CD14-positive monocyte (primary cell): ENCODE measurements at regions of chr16 and their contacts with region 1.

Region 1: GRCh38 chr16:67872786-67873537 is at the start of gene EDC4:
- DNase-seq: peak; percentile 85 to 94 (median 90)
- H3K4me3 ChIP-seq: peak within 1 kb of the TSS; percentile 92 to 99 (median 93)
- H3K4me3 Mint-ChIP-seq: peak within 1 kb of the TSS; percentile 89 to 94
- H3K27ac ChIP-seq: peak within 1 kb of the TSS; percentile 87 to 90
- H3K27ac Mint-ChIP-seq: peak within 1 kb of the TSS; percentile 89 to 96 (median 92)
- H3K4me1 ChIP-seq: peaks cover 31 to 34% of the 10 kb centered on the region in 2 donors
- H3K4me1 Mint-ChIP-seq: peaks cover 38% of the 10 kb centered on the region
- H3K27me3 ChIP-seq: no peaks in the 10 kb centered on the region
- H3K27me3 Mint-ChIP-seq: peaks cover 0 to 3% (median 0%) of the 10 kb centered on the region in 3 donors
- CTCF ChIP-seq: no peak
- polyA plus RNA-seq, gene EDC4: 13.7 to 84.9 (median 18.2) TPM

Region 2: DNA sequence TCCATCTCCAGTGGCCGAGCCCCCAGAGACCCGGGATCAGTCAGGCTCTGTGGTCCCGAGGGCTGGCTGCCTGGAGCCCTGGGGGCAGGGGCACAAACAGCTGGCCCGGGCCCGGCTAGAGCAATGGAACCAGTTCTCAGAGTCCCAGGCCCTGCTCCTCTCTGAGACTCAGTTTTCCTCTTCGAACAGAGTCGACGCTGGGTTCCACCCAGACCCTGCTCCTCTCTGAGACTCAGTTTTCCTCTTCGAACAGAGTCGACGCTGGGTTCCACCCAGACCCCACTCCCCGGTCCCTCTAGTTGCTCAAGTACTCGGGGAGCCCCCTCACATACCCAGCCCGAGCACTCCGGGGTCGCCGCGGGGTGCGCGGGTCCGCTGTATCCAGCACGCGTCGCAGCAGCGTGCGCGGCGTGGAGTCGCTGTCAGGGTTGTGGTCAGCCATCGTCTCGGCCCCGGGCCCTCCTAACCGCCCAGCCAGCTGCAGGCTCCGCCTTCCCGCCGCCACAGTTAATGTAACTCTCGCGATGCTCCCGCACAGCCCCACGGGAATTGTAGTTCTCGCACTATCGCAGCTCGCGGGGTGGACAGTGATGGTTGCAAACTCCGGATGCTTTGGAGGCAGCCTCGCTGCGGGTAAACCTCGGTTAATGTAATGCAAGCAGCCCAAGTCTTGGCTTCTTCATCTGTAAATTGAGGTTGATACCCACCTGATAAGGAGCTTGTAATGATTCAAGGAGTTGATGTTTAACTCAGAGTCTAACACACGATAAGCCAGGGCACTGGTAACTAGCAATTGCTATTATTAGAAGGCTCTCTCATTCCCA is 39.3 kb before region 1 on chr16:
- intact Hi-C with region 1: loop called in 1 of 2 experiments (anchors 5 kb)
- DNase-seq: peak; percentile 84 to 89 (median 86)
- H3K4me3 ChIP-seq: peak overlapping the region; percentile 69 to 88 (median 74)
- H3K4me3 Mint-ChIP-seq: peak overlapping the region; percentile 82 to 87
- H3K27ac ChIP-seq: peak overlapping the region in 1 of 2 donors; percentile 70
- H3K27ac Mint-ChIP-seq: peak overlapping the region in 6 of 7 donors; percentile 60 to 79 (median 68)
- H3K4me1 ChIP-seq: peaks cover 13 to 20% of the 10 kb centered on the region in 2 donors
- H3K4me1 Mint-ChIP-seq: peaks cover 10% of the 10 kb centered on the region
- H3K27me3 ChIP-seq: no peaks in the 10 kb centered on the region
- H3K27me3 Mint-ChIP-seq: peaks cover 1 to 5% (median 2%) of the 10 kb centered on the region in 3 donors
- CTCF ChIP-seq: no peak

Region 3: GRCh38 chr16:67841764-67842508 is 31.0 kb before region 1 on chr16 and contains the start of gene THAP11:
- intact Hi-C with region 1: loop called (anchors 2 kb)
- DNase-seq: peak; percentile 91 to 94 (median 91)
- H3K4me3 ChIP-seq: peak within 1 kb of the TSS; percentile 71 to 87 (median 85)
- H3K4me3 Mint-ChIP-seq: peak within 1 kb of the TSS; percentile 94 to 96
- H3K27ac ChIP-seq: peak within 1 kb of the TSS; percentile 85 to 91
- H3K27ac Mint-ChIP-seq: peak within 1 kb of the TSS; percentile 89 to 99 (median 96)
- H3K4me1 ChIP-seq: peaks cover 40 to 47% of the 10 kb centered on the region in 2 donors
- H3K4me1 Mint-ChIP-seq: peaks cover 39% of the 10 kb centered on the region
- H3K27me3 ChIP-seq: no peaks in the 10 kb centered on the region
- H3K27me3 Mint-ChIP-seq: peaks cover 1 to 2% (median 1%) of the 10 kb centered on the region in 3 donors
- CTCF ChIP-seq: peak; percentile 83
- polyA plus RNA-seq, gene THAP11: 17.6 to 84.2 (median 52.5) TPM